ENCODE measurements at regions of chr1 and their contacts with region 1.

Region 1: GRCh38 chr1:186212544-186213226 is 162.4 kb downstream of the TPR start:
- DNase-seq: peak in 3 of 6 donors; percentile 22 to 46 (median 28)
- ATAC-seq: peak; percentile 82 to 99 (median 97)
- H3K4me3 ChIP-seq: no peak overlapping the region
- H3K27ac ChIP-seq: no peak overlapping the region
- H3K4me1 ChIP-seq: no peaks in the 10 kb centered on the region
- H3K27me3 ChIP-seq: no peaks in the 10 kb centered on the region
- CTCF ChIP-seq: peak; percentile 33 to 68 (median 66)

Region 2: GRCh38 chr1:185720633-185721272 is 491.9 kb before region 1 on chr1:
- intact Hi-C with region 1: loop called in 1 of 3 experiments (anchors 10 kb)
- DNase-seq: no peak
- ATAC-seq: peak in 3 of 4 donors; percentile 64 to 80 (median 72)
- H3K4me3 ChIP-seq: no peak overlapping the region
- H3K27ac ChIP-seq: no peak overlapping the region
- H3K4me1 ChIP-seq: peaks cover 0 to 6% (median 5%) of the 10 kb centered on the region in 3 donors
- H3K27me3 ChIP-seq: peaks cover 0 to 5% (median 0%) of the 10 kb centered on the region in 4 donors
- CTCF ChIP-seq: peak in 3 of 4 donors; percentile 11 to 29 (median 15)

Region 3: GRCh38 chr1:185813401-185813979 is 399.2 kb before region 1 on chr1:
- intact Hi-C with region 1: loop called in 1 of 3 experiments (anchors 5 kb)
- DNase-seq: no peak
- ATAC-seq: peak in 3 of 4 donors; percentile 56 to 64 (median 60)
- H3K4me3 ChIP-seq: no peak overlapping the region
- H3K27ac ChIP-seq: no peak overlapping the region
- H3K4me1 ChIP-seq: no peaks in the 10 kb centered on the region
- H3K27me3 ChIP-seq: no peaks in the 10 kb centered on the region
- CTCF ChIP-seq: peak in 3 of 4 donors; percentile 30 to 32 (median 31)

Region 4: GRCh38 chr1:186183219-186183618 is 29.5 kb before region 1 on chr1:
- intact Hi-C with region 1: no loop called
- DNase-seq: no peak
- ATAC-seq: no peak
- H3K4me3 ChIP-seq: no peak overlapping the region
- H3K27ac ChIP-seq: no peak overlapping the region
- H3K4me1 ChIP-seq: peaks cover 0 to 4% (median 0%) of the 10 kb centered on the region in 3 donors
- H3K27me3 ChIP-seq: peaks cover 0 to 4% (median 0%) of the 10 kb centered on the region in 4 donors
- CTCF ChIP-seq: no peak

Measured in pancreas (tissue), 10 donors.